ENCODE measurements at regions of chr9 and their contacts with region 1.

Region 1: DNA sequence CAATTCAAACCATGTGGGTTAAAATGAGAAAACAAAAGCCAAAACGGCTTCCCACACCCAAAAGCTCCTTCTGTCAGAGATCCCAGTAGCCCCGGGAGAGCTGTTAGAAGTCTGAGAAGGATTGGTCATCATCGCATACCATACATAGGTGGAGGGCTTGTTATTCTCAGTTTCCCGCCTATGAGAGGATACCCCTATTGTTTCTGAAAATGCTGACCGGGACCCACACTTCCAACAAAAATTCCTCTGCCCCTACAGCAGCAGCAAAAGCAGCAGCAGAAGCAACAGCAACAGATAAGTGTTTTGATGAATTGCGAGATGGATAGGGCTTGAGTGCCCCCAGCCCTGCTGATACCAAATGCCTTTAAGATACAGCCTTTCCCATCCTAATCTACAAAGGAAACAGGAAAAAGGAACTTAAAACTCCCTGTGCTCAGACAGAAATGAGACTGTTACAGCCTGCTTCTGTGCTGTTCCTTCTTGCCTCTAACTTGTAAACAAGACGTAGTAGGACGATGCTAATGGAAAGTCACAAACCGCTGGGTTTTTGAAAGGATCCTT is at the start of gene TEK:
- DNase-seq: peak; percentile 44
- ATAC-seq: peak; percentile 57
- H3K4me3 ChIP-seq: peak within 1 kb of the TSS; percentile 55
- H3K27ac ChIP-seq: peak within 1 kb of the TSS; percentile 95
- H3K4me1 ChIP-seq: peaks cover 11% of the 10 kb centered on the region
- H3K27me3 ChIP-seq: no peaks in the 10 kb centered on the region
- CTCF ChIP-seq: no peak
- POLR2A ChIP-seq: no peak
- RAD21 ChIP-seq: no peak
- total RNA-seq, gene TEK: 10.8 and 11.7 TPM in 2 replicates

Region 2: GRCh38 chr9:26892251-26893029 is 216.6 kb before region 1 on chr9 and contains the start of gene CAAP1:
- CTCF ChIA-PET with region 1: interaction called, 10 read pairs
- POLR2A ChIA-PET with region 1: no interaction called
- dilution Hi-C with region 1: no loop called
- in situ Hi-C with region 1: no loop called
- intact Hi-C with region 1: no loop called
- DNase-seq: peak; percentile 92
- ATAC-seq: peak; percentile 96
- H3K4me3 ChIP-seq: peak within 1 kb of the TSS; percentile 84
- H3K27ac ChIP-seq: peak within 1 kb of the TSS; percentile 81
- H3K4me1 ChIP-seq: no peaks in the 10 kb centered on the region
- H3K27me3 ChIP-seq: no peaks in the 10 kb centered on the region
- CTCF ChIP-seq: peak; percentile 49
- POLR2A ChIP-seq: peak; percentile 92
- RAD21 ChIP-seq: peak; percentile 49
- total RNA-seq, gene CAAP1: 6.1 and 12.2 TPM in 2 replicates

Region 3: GRCh38 chr9:27086818-27087680 is 22.0 kb before region 1 on chr9:
- CTCF ChIA-PET with region 1: interaction called, 3 read pairs
- POLR2A ChIA-PET with region 1: interaction called, 13 read pairs
- dilution Hi-C with region 1: no loop called
- in situ Hi-C with region 1: no loop called
- intact Hi-C with region 1: no loop called
- DNase-seq: peak; percentile 90
- ATAC-seq: peak; percentile 78
- H3K4me3 ChIP-seq: peak overlapping the region; percentile 8; the same call in 1 of the 2 replicates
- H3K27ac ChIP-seq: peak overlapping the region; percentile 97
- H3K4me1 ChIP-seq: peaks cover 20% of the 10 kb centered on the region
- H3K27me3 ChIP-seq: no peaks in the 10 kb centered on the region
- CTCF ChIP-seq: no peak
- POLR2A ChIP-seq: peak; percentile 72; the same call in 1 of the 2 replicates
- RAD21 ChIP-seq: no peak; the same call in 1 of the 2 replicates